GM23248 (cell line): ENCODE measurements at regions of chr17 and their contacts with region 1.

Region 1: GRCh38 chr17:37761059-37761458 is 16.2 kb upstream of the HNF1B start:
- DNase-seq: no peak
- H3K4me3 ChIP-seq: no peak overlapping the region
- H3K27ac ChIP-seq: no peak overlapping the region
- H3K4me1 ChIP-seq: no peaks in the 10 kb centered on the region
- H3K27me3 ChIP-seq: peaks cover 52% of the 10 kb centered on the region

Region 2: DNA sequence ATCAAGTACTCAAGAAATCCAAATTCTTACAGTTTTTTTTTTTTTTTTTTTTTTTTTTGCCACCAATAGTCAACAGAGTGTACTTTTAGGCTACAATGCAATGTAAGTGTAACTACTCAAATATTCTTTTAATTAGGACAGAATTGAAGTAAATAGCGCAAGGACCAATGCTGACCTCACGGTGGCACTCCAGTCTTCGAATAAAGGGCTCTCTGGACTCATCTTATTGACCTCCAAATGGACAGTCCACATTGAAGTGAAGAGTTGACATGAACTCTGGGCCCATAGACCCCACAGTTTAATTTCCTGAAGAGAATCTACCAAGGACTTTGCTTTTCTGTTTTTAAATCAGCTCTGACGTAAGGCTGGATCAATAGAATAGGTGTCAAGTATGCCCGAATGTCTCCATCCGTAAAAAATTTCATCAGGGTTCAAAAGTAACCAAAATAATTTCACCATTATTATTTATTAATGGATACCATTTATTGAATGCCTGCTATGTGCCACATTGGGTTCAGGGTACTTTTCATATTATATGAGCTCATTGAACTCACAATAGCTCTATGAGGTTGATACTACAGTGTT is 110.5 kb before region 1 on chr17:
- in situ Hi-C with region 1: loop called (anchors 10 kb)
- DNase-seq: peak; percentile 75
- H3K4me3 ChIP-seq: no peak overlapping the region
- H3K27ac ChIP-seq: no peak overlapping the region
- H3K4me1 ChIP-seq: peaks cover 17% of the 10 kb centered on the region
- H3K27me3 ChIP-seq: no peaks in the 10 kb centered on the region

Region 3: DNA sequence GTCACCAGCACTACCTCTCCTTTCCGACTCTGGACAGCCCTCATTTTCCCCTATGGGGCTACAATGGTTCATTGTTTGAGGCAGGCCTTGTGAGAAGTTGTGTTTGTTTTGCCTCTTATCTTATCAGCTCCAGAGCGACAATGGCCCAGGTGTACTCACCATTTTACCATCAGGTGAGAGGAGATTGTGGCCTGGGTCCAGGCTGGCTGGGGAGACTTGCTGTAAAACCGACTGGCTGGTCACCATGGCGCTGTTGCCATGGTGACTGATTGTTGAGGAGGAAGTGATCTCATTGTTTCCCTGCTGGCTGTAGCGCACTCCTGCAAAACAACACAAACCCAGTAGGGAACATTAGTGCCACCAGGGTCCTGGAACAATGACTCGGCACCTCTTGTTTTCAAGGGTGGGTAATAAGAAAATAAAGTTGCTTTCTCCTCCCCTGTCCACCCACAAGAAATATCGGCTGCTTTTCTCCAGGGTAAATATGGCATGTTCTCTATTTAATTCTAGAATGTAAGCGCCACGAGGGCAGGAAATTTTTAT is 50.6 kb before region 1 on chr17:
- in situ Hi-C with region 1: no loop called
- DNase-seq: peak; percentile 56
- H3K4me3 ChIP-seq: no peak overlapping the region
- H3K27ac ChIP-seq: no peak overlapping the region
- H3K4me1 ChIP-seq: no peaks in the 10 kb centered on the region
- H3K27me3 ChIP-seq: peaks cover 22% of the 10 kb centered on the region

Region 4: GRCh38 chr17:37824534-37825485 is 63.8 kb after region 1 on chr17:
- in situ Hi-C with region 1: loop called (anchors 10 kb)
- DNase-seq: peak; percentile 67
- H3K4me3 ChIP-seq: no peak overlapping the region
- H3K27ac ChIP-seq: no peak overlapping the region
- H3K4me1 ChIP-seq: no peaks in the 10 kb centered on the region; the same call in 1 of the 2 replicates
- H3K27me3 ChIP-seq: no peaks in the 10 kb centered on the region